ENCODE measurements at regions of chr1 and their contacts with region 1.

Region 1: DNA sequence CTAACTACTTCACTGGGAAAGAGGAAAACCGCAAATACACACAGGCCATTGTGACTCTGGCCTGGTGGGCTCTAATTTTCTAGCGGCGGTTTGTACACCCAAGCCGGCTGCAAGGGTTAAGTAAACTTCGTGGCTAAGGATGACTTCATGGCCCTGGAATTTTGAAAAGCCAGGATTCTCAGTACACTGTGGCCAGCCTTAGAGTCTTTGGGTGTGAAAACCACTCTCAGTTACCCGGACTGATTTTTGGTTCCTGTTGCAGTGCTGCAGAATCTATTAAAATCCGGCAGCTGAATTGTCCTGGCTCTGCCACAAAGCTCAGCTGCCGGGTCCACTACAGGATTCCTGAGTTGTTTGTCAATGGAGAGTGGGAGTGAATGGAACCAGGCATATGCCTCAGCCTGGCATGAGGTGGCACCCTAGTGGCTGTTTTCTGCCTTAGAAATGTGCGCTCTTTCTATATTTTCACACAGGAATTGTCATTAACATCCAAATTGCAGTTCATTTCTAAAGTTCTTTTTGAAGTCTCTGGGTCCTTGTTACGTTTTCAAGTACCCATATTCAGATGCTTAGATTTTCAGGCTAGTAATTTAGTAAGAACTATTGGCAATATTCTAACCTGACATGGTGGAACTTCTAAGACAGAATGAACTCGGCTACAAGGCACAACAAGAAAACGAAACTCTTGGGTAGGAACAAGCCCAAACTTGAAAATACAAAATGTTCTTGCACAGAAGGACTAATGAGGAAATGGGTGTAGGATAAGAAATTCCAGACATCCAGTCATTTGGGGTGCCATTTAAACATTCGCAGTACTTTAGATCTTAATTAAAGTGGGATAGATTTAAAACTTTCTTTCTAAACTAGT is 255.9 kb downstream of the NFIA start:
- DNase-seq: peak; percentile 46 to 89 (median 79)
- H3K4me3 ChIP-seq: peak overlapping the region in 54 of 59 donors; percentile 0 to 59 (median 26)
- H3K27ac ChIP-seq: peak overlapping the region; percentile 17 to 88 (median 74)
- H3K27me3 ChIP-seq: no peaks in the 10 kb centered on the region
- CTCF ChIP-seq: peak; percentile 66 to 95 (median 87)

Region 2: DNA sequence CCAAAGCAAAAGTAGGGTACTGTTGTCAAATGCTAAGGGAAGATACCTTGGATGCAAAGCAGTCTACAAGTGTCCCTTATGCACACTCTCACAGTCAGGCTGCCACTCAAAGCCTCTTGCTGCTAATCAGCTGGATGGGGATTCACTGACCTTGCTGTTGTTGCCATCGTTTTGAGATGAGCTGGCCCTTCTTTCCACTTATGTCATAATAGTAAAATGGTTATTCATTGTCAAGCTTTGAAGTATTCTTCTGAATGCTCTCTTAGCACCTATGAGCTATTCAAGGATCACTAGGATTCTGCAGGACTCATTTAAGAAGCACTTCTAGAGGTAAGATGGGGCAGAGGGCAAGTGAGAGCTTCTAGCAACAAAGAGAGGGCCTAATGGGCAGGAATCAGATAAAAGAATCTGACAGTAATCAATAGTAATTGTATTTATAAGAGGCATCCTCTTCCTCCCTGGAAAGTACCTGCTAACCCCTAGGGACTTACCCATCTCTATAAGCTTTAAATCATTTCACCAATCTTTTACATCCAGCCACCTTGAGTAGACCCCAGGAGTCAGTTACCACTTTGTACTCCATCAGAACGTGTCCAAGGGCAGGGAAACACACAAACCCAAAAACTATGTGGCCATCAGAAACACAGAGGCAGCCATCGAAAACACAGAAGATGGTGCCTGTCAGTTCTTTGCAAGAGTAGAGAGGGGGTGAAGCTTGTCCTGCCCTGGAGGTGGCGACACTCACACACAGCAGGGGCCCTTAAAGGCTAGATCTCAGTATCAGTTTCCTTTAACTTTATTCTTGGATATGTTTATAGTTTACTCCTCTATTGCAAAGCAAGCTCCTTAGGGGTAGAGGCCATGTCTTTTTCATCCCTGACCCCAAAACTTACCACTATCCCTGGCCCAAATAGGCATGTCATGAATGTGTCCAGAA is 359.5 kb before region 1 on chr1:
- intact Hi-C with region 1: loop called in 1 of 2 experiments (anchors 10 kb)
- DNase-seq: no peak
- H3K4me3 ChIP-seq: no peak overlapping the region
- H3K27ac ChIP-seq: no peak overlapping the region
- H3K27me3 ChIP-seq: no peaks in the 10 kb centered on the region
- CTCF ChIP-seq: peak in 23 of 56 donors; percentile 10 to 41 (median 21)

Region 3: GRCh38 chr1:61210435-61211154 is 127.6 kb before region 1 on chr1:
- intact Hi-C with region 1: loop called in 1 of 2 experiments (anchors 10 kb)
- DNase-seq: no peak
- H3K4me3 ChIP-seq: no peak overlapping the region
- H3K27ac ChIP-seq: peak overlapping the region in 16 of 59 donors; percentile 3 to 55 (median 26)
- H3K27me3 ChIP-seq: no peaks in the 10 kb centered on the region
- CTCF ChIP-seq: peak in 6 of 56 donors; percentile 7 to 19 (median 15)

Region 4: DNA sequence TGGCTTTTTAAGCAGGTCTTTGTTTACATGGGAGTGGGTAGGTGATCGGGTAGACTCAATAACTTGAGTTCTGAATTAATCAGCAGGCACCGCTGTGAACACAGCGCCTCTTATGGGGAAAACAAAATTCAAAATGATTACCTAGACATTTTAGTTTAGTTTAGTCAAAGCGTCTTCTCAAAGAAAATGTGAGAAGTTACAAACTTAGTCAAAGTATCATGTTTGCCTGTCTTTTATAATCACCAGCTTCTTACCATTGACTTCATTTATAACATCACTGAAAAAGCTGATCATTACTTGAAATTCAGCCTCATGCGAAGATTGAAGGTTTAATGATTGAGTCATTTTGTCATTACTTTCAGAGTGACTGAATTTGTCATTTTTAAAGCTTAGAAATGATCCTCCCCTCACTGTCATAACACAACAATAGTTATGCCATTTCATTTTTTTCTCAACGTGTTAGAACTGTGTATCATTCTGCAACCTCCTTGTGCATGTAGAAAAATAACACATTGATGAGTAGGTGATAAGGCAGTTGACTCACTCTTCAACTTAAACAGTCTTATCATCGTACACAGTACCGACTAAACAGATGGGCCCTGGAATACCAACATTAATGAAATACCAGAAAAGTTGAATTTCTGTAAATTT is 67.3 kb before region 1 on chr1:
- intact Hi-C with region 1: loop called in 1 of 2 experiments (anchors 10 kb)
- DNase-seq: no peak
- H3K4me3 ChIP-seq: no peak overlapping the region
- H3K27ac ChIP-seq: peak overlapping the region in 53 of 59 donors; percentile 3 to 92 (median 79)
- H3K27me3 ChIP-seq: no peaks in the 10 kb centered on the region
- CTCF ChIP-seq: peak in 16 of 56 donors; percentile 8 to 54 (median 28)

Region 5: GRCh38 chr1:61378494-61379180 is 40.4 kb after region 1 on chr1:
- intact Hi-C with region 1: no loop called
- DNase-seq: no peak
- H3K4me3 ChIP-seq: no peak overlapping the region
- H3K27ac ChIP-seq: no peak overlapping the region
- H3K27me3 ChIP-seq: no peaks in the 10 kb centered on the region
- CTCF ChIP-seq: no peak

Region 6: DNA sequence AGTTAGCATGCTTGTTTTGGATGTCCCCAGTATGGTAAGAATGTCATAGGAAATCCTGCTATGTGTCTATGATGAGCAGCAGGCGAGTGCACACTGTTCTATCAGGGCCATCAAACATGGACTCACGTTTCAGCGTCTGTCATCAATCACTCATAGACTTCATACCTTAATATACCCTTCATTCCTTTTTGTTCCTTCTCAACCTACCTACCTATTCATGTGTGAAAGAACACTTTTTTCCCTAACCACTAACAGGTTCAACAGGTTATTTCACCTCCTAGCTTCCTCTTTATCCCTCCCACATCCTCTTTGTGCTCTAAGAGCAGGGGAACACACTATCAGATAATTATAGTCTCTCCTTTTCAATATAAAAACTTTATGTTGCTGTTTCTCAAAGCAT is 86.2 kb after region 1 on chr1:
- intact Hi-C with region 1: no loop called
- DNase-seq: no peak
- H3K4me3 ChIP-seq: no peak overlapping the region
- H3K27ac ChIP-seq: no peak overlapping the region
- H3K27me3 ChIP-seq: no peaks in the 10 kb centered on the region
- CTCF ChIP-seq: no peak

Region 7: GRCh38 chr1:61453111-61453961 is 115.1 kb after region 1 on chr1:
- intact Hi-C with region 1: loop called (anchors 5 to 10 kb)
- DNase-seq: peak; percentile 67 to 90 (median 80)
- H3K4me3 ChIP-seq: peak overlapping the region in 11 of 59 donors; percentile 6 to 29 (median 13)
- H3K27ac ChIP-seq: peak overlapping the region in 58 of 59 donors; percentile 0 to 83 (median 68)
- H3K27me3 ChIP-seq: no peaks in the 10 kb centered on the region
- CTCF ChIP-seq: peak; percentile 23 to 87 (median 76)

Region 8: GRCh38 chr1:61539720-61540462 is 201.7 kb after region 1 on chr1:
- intact Hi-C with region 1: no loop called
- DNase-seq: no peak
- H3K4me3 ChIP-seq: no peak overlapping the region
- H3K27ac ChIP-seq: no peak overlapping the region
- H3K27me3 ChIP-seq: no peaks in the 10 kb centered on the region
- CTCF ChIP-seq: no peak